ENCODE measurements at regions of chr14 and their contacts with region 1.

Region 1: GRCh38 chr14:86961106-86961716 is 1031.8 kb downstream of the GALC start:
- DNase-seq: peak; percentile 9
- ATAC-seq: peak; percentile 84
- H3K4me3 ChIP-seq: no peak overlapping the region
- H3K27ac ChIP-seq: no peak overlapping the region
- H3K4me1 ChIP-seq: no peaks in the 10 kb centered on the region
- H3K27me3 ChIP-seq: no peaks in the 10 kb centered on the region; a peak in 1 of 5 replicates
- CTCF ChIP-seq: peak; percentile 60
- EP300 ChIP-seq: no peak
- POLR2A ChIP-seq: no peak
- RAD21 ChIP-seq: no peak

Region 2: DNA sequence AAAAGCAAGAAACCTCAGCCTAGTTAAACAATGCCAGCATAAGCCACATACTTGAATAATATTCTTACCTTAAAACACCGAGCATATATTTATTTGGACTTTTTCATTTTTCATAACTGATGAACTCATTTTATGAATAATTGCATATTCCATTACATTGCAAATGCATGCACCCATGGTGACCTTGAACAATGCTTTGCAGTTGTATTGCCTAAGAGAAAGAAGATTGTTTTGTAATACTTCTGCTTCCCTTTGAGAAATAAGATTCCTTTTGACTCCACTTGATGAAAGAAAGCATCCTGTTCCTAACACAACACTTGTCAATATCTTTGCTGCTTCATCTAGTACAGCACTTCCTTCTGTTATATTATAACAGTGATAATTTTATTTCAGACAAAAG is 249.0 kb before region 1 on chr14:
- CTCF ChIA-PET with region 1: no interaction called
- POLR2A ChIA-PET with region 1: no interaction called
- in situ Hi-C with region 1: no loop called
- intact Hi-C with region 1: no loop called
- DNase-seq: peak; percentile 10
- ATAC-seq: no peak
- H3K4me3 ChIP-seq: no peak overlapping the region
- H3K27ac ChIP-seq: peak overlapping the region; percentile 38
- H3K4me1 ChIP-seq: peaks cover 69% of the 10 kb centered on the region
- H3K27me3 ChIP-seq: no peaks in the 10 kb centered on the region
- CTCF ChIP-seq: no peak
- EP300 ChIP-seq: peak in 1 of 2 experiments; percentile 32; a peak in 1 of 4 replicates
- POLR2A ChIP-seq: no peak
- RAD21 ChIP-seq: no peak

Region 3: GRCh38 chr14:87034680-87035079 is 73.5 kb after region 1 on chr14:
- CTCF ChIA-PET with region 1: no interaction called
- POLR2A ChIA-PET with region 1: no interaction called
- in situ Hi-C with region 1: no loop called
- intact Hi-C with region 1: no loop called
- DNase-seq: no peak
- ATAC-seq: no peak
- H3K4me3 ChIP-seq: no peak overlapping the region
- H3K27ac ChIP-seq: no peak overlapping the region
- H3K4me1 ChIP-seq: no peaks in the 10 kb centered on the region
- H3K27me3 ChIP-seq: 0 out of 5 replicates have a peak, but pooled peaks cover 0 to 3% of the 10 kb centered on the region in 2 experiments
- CTCF ChIP-seq: no peak
- EP300 ChIP-seq: no peak
- POLR2A ChIP-seq: no peak
- RAD21 ChIP-seq: no peak

Region 4: DNA sequence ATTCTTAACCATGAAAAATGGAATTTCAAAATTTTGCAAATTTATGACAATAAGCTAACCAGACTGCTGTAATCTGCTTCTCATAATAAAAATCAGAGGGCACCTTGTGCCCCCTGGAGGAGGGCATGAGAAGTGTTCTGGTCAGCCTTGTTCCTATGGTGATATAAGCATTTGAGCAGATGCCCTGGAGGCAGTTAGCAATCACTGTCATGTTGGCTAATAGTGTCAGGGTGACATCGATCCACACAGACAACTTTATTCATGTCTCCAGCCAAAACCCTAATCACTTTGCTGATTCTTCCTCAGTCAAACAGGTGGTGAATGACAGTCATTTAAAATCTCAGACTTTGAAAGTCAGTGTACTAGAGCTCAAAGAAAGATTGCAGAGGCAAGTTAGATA is 88.7 kb after region 1 on chr14:
- CTCF ChIA-PET with region 1: no interaction called
- POLR2A ChIA-PET with region 1: no interaction called
- in situ Hi-C with region 1: no loop called
- intact Hi-C with region 1: loop called (anchors 1 kb)
- DNase-seq: peak; percentile 37
- ATAC-seq: peak; percentile 90
- H3K4me3 ChIP-seq: no peak overlapping the region
- H3K27ac ChIP-seq: no peak overlapping the region
- H3K4me1 ChIP-seq: no peaks in the 10 kb centered on the region
- H3K27me3 ChIP-seq: no peaks in the 10 kb centered on the region
- CTCF ChIP-seq: peak; percentile 65
- EP300 ChIP-seq: no peak
- POLR2A ChIP-seq: no peak
- RAD21 ChIP-seq: no peak

Region 5: GRCh38 chr14:87067597-87067996 is 106.4 kb after region 1 on chr14:
- CTCF ChIA-PET with region 1: no interaction called
- POLR2A ChIA-PET with region 1: no interaction called
- in situ Hi-C with region 1: no loop called
- intact Hi-C with region 1: loop called (anchors 1 kb)
- DNase-seq: no peak
- ATAC-seq: no peak
- H3K4me3 ChIP-seq: no peak overlapping the region
- H3K27ac ChIP-seq: no peak overlapping the region
- H3K4me1 ChIP-seq: no peaks in the 10 kb centered on the region
- H3K27me3 ChIP-seq: no peaks in the 10 kb centered on the region
- CTCF ChIP-seq: no peak
- EP300 ChIP-seq: no peak
- POLR2A ChIP-seq: no peak
- RAD21 ChIP-seq: no peak

Measured in HepG2 (cell line).